Sigmoid colon (tissue), 7 donors: ENCODE measurements at regions of chr9 and their contacts with region 1.

Region 1: GRCh38 chr9:6805532-6805931 is 47.8 kb downstream of the KDM4C start:
- DNase-seq: no peak
- H3K4me3 ChIP-seq: no peak overlapping the region
- H3K27ac ChIP-seq: no peak overlapping the region
- H3K4me1 ChIP-seq: no peaks in the 10 kb centered on the region
- H3K27me3 ChIP-seq: no peaks in the 10 kb centered on the region
- CTCF ChIP-seq: no peak
- EP300 ChIP-seq: no peak
- POLR2A ChIP-seq: no peak

Region 2: DNA sequence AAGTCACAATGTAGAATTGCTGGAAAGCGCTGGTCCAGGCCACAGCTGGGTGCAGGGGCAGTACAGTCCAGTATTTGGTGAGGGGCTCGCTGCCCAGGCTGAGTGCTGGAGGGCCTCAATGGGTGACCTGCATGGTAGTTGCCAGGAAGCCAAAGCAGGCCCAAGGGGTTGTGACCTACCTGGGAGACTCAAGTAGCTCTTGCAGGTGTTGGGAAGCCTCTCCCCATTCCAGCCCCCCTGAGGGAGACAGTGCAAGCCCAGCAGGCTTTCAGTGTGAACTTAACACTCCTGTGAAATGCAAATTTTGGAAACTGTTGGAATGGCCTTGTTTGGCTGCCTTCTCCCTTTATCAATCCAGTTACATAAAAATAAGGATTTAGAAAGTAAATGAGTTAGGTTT is 33.8 kb before region 1 on chr9:
- intact Hi-C with region 1: loop called (anchors 5 kb)
- DNase-seq: peak; percentile 57
- H3K4me3 ChIP-seq: no peak overlapping the region
- H3K27ac ChIP-seq: no peak overlapping the region
- H3K4me1 ChIP-seq: peaks cover 0 to 7% (median 3%) of the 10 kb centered on the region in 4 donors
- H3K27me3 ChIP-seq: no peaks in the 10 kb centered on the region
- CTCF ChIP-seq: no peak
- EP300 ChIP-seq: no peak
- POLR2A ChIP-seq: no peak